Heart left ventricle (tissue), 16 donors: ENCODE measurements at regions of chr10 and their contacts with region 1.

Region 1: GRCh38 chr10:13724484-13724883 is 137.7 kb downstream of the PRPF18 start:
- DNase-seq: peak in 4 of 5 donors; percentile 50 to 72 (median 55)
- ATAC-seq: peak; percentile 54 to 88 (median 82)
- H3K4me3 ChIP-seq: no peak overlapping the region
- H3K27ac ChIP-seq: peak overlapping the region in 5 of 12 donors; percentile 2 to 36 (median 34)
- H3K4me1 ChIP-seq: peaks cover 0 to 17% (median 8%) of the 10 kb centered on the region in 12 donors
- H3K27me3 ChIP-seq: no peaks in the 10 kb centered on the region
- CTCF ChIP-seq: no peak
- POLR2A ChIP-seq: no peak

Region 2: GRCh38 chr10:13684252-13684791 is 40.2 kb before region 1 on chr10:
- intact Hi-C with region 1: loop called in 2 of 10 experiments (anchors 5 kb)
- DNase-seq: peak; percentile 89 to 94 (median 90)
- ATAC-seq: peak; percentile 60 to 77 (median 68)
- H3K4me3 ChIP-seq: peak overlapping the region in 1 of 12 donors; percentile 0
- H3K27ac ChIP-seq: peak overlapping the region; percentile 60 to 95 (median 84)
- H3K4me1 ChIP-seq: peaks cover 11 to 64% (median 46%) of the 10 kb centered on the region in 12 donors
- H3K27me3 ChIP-seq: no peaks in the 10 kb centered on the region
- CTCF ChIP-seq: no peak
- POLR2A ChIP-seq: no peak

Region 3: DNA sequence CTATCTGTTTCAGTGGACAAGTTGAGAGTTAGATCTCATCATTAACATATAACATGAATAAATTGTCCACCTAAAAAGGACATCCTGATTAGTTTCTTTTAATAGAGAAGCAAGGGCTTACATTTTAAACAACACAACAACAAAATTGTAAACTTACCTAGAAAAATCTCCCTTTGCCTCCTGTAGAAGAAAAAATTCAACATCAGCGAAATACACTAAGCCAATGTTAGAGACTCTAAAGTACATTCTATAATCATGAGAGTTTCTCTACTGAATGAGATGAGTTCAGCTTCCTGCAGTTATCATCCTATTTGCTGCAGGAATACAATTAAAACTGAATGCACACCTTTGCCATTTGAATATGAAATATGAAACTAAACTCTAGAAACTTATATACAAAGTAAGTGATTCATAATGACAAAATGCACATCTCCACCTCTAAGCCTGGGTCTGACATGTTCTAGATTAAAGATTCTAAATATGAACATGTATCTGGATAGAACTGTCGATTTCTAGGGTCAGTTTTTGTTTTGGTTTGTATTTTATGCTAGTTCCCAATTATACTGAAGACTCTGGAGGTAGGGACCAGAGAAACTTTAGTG is 37.1 kb after region 1 on chr10:
- intact Hi-C with region 1: loop called in 1 of 10 experiments (anchors 5 kb)
- DNase-seq: no peak
- ATAC-seq: no peak
- H3K4me3 ChIP-seq: no peak overlapping the region
- H3K27ac ChIP-seq: no peak overlapping the region
- H3K4me1 ChIP-seq: peaks cover 0 to 22% (median 8%) of the 10 kb centered on the region in 12 donors
- H3K27me3 ChIP-seq: no peaks in the 10 kb centered on the region
- CTCF ChIP-seq: no peak
- POLR2A ChIP-seq: no peak

Region 4: GRCh38 chr10:13769955-13770354 is 45.5 kb after region 1 on chr10:
- intact Hi-C with region 1: loop called in 2 of 10 experiments (anchors 5 to 10 kb)
- DNase-seq: no peak
- ATAC-seq: no peak
- H3K4me3 ChIP-seq: no peak overlapping the region
- H3K27ac ChIP-seq: no peak overlapping the region
- H3K4me1 ChIP-seq: peaks cover 0 to 16% (median 11%) of the 10 kb centered on the region in 12 donors
- H3K27me3 ChIP-seq: no peaks in the 10 kb centered on the region
- CTCF ChIP-seq: no peak
- POLR2A ChIP-seq: no peak